ENCODE measurements at regions of chr16 and their contacts with region 1.

Region 1: GRCh38 chr16:53346-54236 is at the starts of genes POLR3K and SNRNP25:
- DNase-seq: peak; percentile 100
- ATAC-seq: peak; percentile 98
- H3K4me3 Mint-ChIP-seq: peak within 1 kb of the TSS; percentile 94
- H3K27ac Mint-ChIP-seq: peak within 1 kb of the TSS; percentile 90
- H3K4me1 Mint-ChIP-seq: peaks cover 30% of the 10 kb centered on the region
- H3K27me3 Mint-ChIP-seq: no peaks in the 10 kb centered on the region
- total RNA-seq, gene POLR3K: 31.9 to 46.8 TPM
- total RNA-seq, gene SNRNP25: 42.5 to 50.0 TPM

Region 2: DNA sequence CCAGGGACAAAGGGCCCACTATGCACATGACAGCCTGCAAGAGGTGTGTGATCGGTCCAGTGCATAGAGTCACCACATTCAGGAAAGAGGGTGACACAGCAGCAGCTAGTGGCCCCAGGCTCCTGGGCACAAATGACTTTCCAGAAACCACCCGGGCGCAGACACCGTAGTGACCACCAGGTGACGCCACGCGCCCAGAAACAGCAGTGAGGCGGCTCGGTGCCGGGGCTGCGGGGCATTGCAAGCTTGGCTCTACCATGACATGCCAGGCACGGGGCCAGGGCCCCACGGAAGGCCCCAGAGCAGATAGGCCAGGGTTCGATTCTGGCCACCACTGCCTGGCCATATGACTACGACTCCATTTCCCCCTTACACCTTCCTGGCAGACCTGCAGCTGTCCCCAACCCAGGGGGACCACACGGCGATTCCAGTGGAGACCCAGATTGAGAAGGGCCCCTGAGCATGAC is 12.1 kb after region 1 on chr16:
- CTCF ChIA-PET with region 1: interaction called, 15 read pairs
- POLR2A ChIA-PET with region 1: no interaction called
- intact Hi-C with region 1: no loop called
- DNase-seq: peak; percentile 94
- ATAC-seq: peak; percentile 94
- H3K4me3 Mint-ChIP-seq: no peak overlapping the region
- H3K27ac Mint-ChIP-seq: no peak overlapping the region
- H3K4me1 Mint-ChIP-seq: no peaks in the 10 kb centered on the region
- H3K27me3 Mint-ChIP-seq: peaks cover 8% of the 10 kb centered on the region

Region 3: DNA sequence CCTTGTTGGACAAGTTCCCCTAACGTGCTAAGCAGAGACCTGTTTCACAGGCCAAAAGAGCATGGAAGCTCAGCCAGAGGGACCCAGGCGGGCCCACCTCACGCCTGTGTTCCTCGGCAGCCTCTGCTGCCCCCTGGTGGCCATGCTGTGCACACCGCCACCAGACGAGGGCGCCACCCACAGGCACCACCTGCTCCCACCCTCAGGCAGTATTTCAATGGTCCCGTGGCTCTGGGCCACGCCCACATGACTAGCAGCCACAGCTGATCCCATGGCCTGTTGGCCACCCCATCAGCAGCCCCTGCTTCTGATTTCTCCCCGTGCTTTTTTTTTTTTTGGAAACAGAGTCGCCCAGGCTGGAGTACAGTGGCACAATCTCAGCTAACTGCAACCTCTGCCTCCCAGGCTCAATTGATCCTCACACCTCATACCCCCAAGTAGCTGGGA is 43.4 kb after region 1 on chr16:
- CTCF ChIA-PET with region 1: interaction called, 12 read pairs
- POLR2A ChIA-PET with region 1: no interaction called
- intact Hi-C with region 1: loop called in 1 of 2 experiments (anchors 1 kb)
- DNase-seq: peak; percentile 94
- ATAC-seq: peak; percentile 99
- H3K4me3 Mint-ChIP-seq: no peak overlapping the region
- H3K27ac Mint-ChIP-seq: no peak overlapping the region
- H3K4me1 Mint-ChIP-seq: no peaks in the 10 kb centered on the region
- H3K27me3 Mint-ChIP-seq: no peaks in the 10 kb centered on the region

Region 4: GRCh38 chr16:129075-129474 is 75.5 kb after region 1 on chr16:
- CTCF ChIA-PET with region 1: no interaction called
- POLR2A ChIA-PET with region 1: no interaction called
- intact Hi-C with region 1: no loop called
- DNase-seq: no peak
- ATAC-seq: no peak
- H3K4me3 Mint-ChIP-seq: no peak overlapping the region
- H3K27ac Mint-ChIP-seq: no peak overlapping the region
- H3K4me1 Mint-ChIP-seq: peaks cover 26% of the 10 kb centered on the region
- H3K27me3 Mint-ChIP-seq: no peaks in the 10 kb centered on the region

Region 5: DNA sequence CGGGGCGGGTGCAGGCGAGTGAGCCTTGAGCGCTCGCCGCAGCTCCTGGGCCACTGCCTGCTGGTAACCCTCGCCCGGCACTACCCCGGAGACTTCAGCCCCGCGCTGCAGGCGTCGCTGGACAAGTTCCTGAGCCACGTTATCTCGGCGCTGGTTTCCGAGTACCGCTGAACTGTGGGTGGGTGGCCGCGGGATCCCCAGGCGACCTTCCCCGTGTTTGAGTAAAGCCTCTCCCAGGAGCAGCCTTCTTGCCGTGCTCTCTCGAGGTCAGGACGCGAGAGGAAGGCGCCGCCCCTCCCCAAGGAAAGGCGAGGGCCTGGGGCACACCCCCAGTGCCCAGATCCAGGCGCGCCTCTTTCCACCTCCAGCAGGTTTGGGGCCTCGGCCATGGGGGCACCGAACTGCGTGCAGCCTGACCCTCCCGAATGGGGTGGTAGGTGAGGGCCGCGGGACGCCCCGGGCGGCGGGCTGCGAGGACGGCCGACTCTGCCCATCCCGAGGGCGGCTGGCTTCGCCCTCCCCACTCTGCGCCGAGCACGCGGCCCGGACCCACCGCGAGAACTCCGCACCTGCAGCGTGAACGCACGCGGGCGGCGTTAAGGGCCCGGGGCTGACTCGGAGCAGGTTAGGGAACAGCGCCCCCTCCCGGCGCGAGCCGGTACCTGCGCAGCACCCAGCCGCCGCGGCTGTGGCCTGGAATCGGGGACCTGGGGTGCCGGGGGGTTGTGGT is 127.5 kb after region 1 on chr16:
- CTCF ChIA-PET with region 1: no interaction called
- POLR2A ChIA-PET with region 1: no interaction called
- intact Hi-C with region 1: loop called in 1 of 2 experiments (anchors 1 kb)
- DNase-seq: peak; percentile 94
- ATAC-seq: peak; percentile 88
- H3K4me3 Mint-ChIP-seq: peak overlapping the region; percentile 39
- H3K27ac Mint-ChIP-seq: no peak overlapping the region
- H3K4me1 Mint-ChIP-seq: peaks cover 3% of the 10 kb centered on the region
- H3K27me3 Mint-ChIP-seq: peaks cover 21% of the 10 kb centered on the region

Region 6: DNA sequence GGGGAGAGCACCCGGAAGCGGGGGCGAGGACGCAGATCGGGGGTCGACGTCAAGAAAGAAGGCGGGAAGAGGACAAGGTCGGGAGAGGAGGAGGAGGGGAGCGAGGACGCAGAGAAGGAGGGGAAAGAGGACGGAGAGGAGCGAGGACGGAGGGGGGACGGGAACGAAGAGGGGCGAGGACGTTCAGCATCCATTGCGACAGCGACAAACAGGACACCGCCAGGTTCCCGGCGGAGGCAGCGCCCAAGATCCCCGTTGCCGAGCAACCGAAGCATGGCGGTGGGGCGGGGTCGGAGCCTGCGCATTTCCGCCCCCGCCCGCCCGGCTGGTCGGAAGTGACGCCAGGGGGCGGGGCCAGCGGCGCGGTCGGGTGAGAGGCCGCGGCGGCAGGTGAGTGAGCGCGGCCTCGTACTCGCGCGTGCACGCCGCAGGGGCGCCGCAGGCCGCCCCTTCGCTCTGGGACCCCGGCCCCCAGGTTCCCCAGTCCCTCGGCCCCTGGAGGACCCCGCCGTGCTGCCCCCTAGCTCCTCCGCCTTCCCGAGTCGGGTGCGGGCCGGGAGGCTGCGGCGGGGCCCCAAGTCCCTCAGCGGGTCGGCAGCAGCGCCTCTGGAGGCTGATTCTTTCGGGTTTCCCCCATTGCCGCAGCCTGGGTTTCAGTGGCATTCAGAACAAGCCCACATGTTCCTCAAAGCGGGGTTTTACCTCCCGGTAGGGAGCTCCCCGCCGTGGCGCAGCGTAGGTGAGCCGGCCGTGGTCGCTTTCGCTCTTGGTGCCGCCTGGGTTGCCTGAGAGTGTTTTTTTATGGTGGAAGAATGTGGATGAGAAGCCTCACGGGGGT is 181.1 kb after region 1 on chr16 and contains the start of gene FAM234A:
- CTCF ChIA-PET with region 1: no interaction called
- POLR2A ChIA-PET with region 1: interaction called, 4 read pairs
- intact Hi-C with region 1: loop called in 1 of 2 experiments (anchors 1 kb)
- DNase-seq: peak; percentile 98
- ATAC-seq: peak; percentile 91
- H3K4me3 Mint-ChIP-seq: peak within 1 kb of the TSS; percentile 90
- H3K27ac Mint-ChIP-seq: peak within 1 kb of the TSS; percentile 96
- H3K4me1 Mint-ChIP-seq: peaks cover 17% of the 10 kb centered on the region
- H3K27me3 Mint-ChIP-seq: no peaks in the 10 kb centered on the region
- total RNA-seq, gene FAM234A: 11.3 to 15.2 TPM